ENCODE measurements at regions of chr22 and their contacts with region 1.

Region 1: GRCh38 chr22:39454385-39454871 is 2.4 kb upstream of the MGAT3 start:
- DNase-seq: peak in 2 of 3 donors; percentile 52 to 68
- H3K4me3 ChIP-seq: peak overlapping the region in 1 of 7 experiments; percentile 4
- H3K27ac ChIP-seq: no peak overlapping the region
- H3K4me1 ChIP-seq: peaks cover 0 to 76% (median 34%) of the 10 kb centered on the region in 4 experiments
- H3K27me3 ChIP-seq: peaks cover 0 to 19% (median 8%) of the 10 kb centered on the region in 5 experiments

Region 2: GRCh38 chr22:39332441-39333064 is 121.9 kb before region 1 on chr22:
- CTCF ChIA-PET with region 1: no interaction called
- POLR2A ChIA-PET with region 1: no interaction called
- DNase-seq: peak in 2 of 3 donors; percentile 52 to 64
- H3K4me3 ChIP-seq: no peak overlapping the region
- H3K27ac ChIP-seq: no peak overlapping the region
- H3K4me1 ChIP-seq: peaks cover 0 to 25% (median 15%) of the 10 kb centered on the region in 4 experiments
- H3K27me3 ChIP-seq: no peaks in the 10 kb centered on the region

Region 3: DNA sequence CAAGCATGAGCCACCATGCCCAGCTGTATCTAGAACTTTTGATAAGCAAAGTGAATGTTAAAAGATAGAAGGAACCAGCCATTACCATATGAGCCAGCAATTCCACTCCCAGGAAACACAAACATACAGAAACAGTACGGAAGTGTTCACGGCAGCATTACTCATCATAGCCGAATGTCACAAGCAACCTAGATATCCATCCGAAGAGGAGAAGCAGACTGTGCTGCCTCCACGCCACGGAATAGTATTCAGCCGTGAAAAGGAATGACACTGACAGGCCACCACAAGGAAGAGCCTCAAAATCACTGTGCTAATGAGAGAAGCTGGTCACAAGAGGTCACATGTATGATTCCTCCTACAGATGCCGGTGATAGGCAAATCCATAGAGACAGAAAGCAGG is 15.3 kb before region 1 on chr22:
- CTCF ChIA-PET with region 1: interaction called, 11 read pairs
- POLR2A ChIA-PET with region 1: no interaction called
- DNase-seq: peak in 2 of 3 donors; percentile 41 to 53
- H3K4me3 ChIP-seq: no peak overlapping the region
- H3K27ac ChIP-seq: no peak overlapping the region
- H3K4me1 ChIP-seq: peaks cover 0 to 40% (median 14%) of the 10 kb centered on the region in 4 experiments
- H3K27me3 ChIP-seq: no peaks in the 10 kb centered on the region

Region 4: GRCh38 chr22:39468487-39469325 is 14.3 kb after region 1 on chr22:
- CTCF ChIA-PET with region 1: interaction called, 10 read pairs
- POLR2A ChIA-PET with region 1: interaction called, 4 read pairs
- DNase-seq: peak in 2 of 3 donors; percentile 55 to 65
- H3K4me3 ChIP-seq: peak overlapping the region in 1 of 7 experiments; percentile 42
- H3K27ac ChIP-seq: no peak overlapping the region
- H3K4me1 ChIP-seq: peaks cover 1 to 80% (median 57%) of the 10 kb centered on the region in 4 experiments
- H3K27me3 ChIP-seq: no peaks in the 10 kb centered on the region